ENCODE measurements at regions of chr18 and their contacts with region 1.

Region 1: DNA sequence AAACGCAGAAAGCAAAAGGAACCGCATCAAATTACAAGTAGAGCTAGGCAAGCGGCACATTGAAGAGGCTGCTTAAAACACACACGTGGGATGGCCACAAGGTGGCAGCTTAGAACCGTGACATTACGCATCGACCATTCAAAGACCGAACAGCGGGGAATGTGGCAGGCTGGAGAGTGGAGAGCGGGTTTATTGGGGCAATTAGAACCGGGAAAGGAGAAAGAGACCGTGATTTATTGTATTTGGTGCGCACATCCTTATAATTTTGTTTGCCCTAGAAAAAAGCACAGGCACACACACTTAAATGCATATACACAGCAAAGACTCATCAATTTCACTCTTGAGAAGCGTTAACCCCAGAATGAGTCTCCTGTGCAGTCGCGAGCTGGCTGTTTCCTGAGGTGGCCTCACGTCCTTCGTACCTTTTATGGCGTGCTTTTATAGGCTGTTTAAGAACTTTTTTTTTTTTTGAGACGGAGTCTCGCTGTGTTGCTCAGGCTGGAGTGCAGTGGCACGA is 31.7 kb upstream of the MEP1B start:
- DNase-seq: peak; percentile 92
- H3K4me3 Mint-ChIP-seq: no peak overlapping the region
- H3K27ac Mint-ChIP-seq: no peak overlapping the region
- H3K4me1 Mint-ChIP-seq: peaks cover 4% of the 10 kb centered on the region
- H3K27me3 Mint-ChIP-seq: no peaks in the 10 kb centered on the region
- CTCF ChIP-seq: peak; percentile 76

Region 2: GRCh38 chr18:32189790-32190189 is 31.6 kb after region 1 on chr18 and contains the start of gene MEP1B:
- CTCF ChIA-PET with region 1: interaction called, 13 read pairs
- POLR2A ChIA-PET with region 1: no interaction called
- intact Hi-C with region 1: no loop called
- DNase-seq: no peak
- H3K4me3 Mint-ChIP-seq: no peak within 1 kb of the TSS
- H3K27ac Mint-ChIP-seq: no peak within 1 kb of the TSS
- H3K4me1 Mint-ChIP-seq: no peaks in the 10 kb centered on the region
- H3K27me3 Mint-ChIP-seq: no peaks in the 10 kb centered on the region
- CTCF ChIP-seq: no peak
- total RNA-seq, gene MEP1B: not detected in 2 replicates

Region 3: DNA sequence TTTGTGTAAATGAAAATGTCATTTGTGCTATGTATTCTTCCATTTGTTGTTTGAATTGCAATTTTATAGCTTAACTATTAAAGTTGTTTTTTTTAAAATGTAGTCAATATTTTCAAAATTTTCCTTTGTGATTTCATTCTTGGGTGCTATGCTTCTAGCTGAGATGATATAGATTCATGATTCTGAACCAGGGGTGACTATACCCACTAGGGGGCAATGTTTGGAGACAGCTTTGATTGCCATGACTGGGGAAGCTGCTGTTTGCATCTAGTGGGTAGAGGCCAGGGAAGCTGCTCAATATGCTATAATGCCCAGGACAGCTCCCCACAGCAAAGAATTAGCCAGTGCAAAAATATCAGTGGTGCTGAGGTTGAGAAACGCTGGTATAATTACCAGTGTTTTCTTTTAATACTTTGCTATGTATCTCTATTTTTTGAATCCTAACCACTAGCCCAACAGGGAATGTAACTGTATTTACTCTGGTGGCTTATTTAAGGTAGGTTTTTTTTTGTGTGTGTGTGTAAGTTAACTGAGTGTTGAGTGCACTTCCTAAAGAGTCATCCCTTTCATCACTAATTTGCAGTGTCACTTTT is 131.4 kb after region 1 on chr18:
- CTCF ChIA-PET with region 1: interaction called, 14 read pairs
- POLR2A ChIA-PET with region 1: no interaction called
- intact Hi-C with region 1: no loop called
- DNase-seq: peak; percentile 82
- H3K4me3 Mint-ChIP-seq: no peak overlapping the region
- H3K27ac Mint-ChIP-seq: no peak overlapping the region
- H3K4me1 Mint-ChIP-seq: peaks cover 26% of the 10 kb centered on the region
- H3K27me3 Mint-ChIP-seq: no peaks in the 10 kb centered on the region
- CTCF ChIP-seq: peak; percentile 59

Region 4: DNA sequence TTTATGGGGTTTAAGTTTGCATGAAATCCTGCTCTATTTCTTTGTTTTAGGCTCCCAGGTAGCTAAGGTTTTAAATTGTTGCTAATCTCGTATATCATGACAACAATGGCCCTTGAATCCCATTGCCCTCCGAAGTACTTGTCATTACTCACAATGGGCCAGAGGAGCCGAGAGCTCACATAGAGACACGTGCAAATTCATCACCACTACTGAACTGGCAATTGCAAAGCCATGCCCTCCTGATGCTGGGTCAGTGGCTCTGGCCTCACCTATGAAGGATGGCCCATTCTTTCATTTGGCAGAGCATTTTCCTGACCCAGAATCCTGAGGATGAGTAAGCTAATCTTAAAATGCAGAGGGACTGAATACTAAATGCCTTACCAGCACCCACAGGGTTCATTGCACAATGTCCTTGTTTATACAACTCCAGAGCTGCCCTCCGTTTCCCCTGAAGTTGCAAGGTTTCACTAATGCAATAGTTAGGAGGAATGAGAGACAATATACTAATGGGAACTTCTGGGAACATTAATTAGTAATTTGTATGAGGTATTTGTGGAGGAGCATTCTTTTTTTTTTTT is 384.1 kb after region 1 on chr18:
- CTCF ChIA-PET with region 1: interaction called, 207 read pairs
- POLR2A ChIA-PET with region 1: no interaction called
- intact Hi-C with region 1: no loop called
- DNase-seq: peak; percentile 93
- H3K4me3 Mint-ChIP-seq: peak overlapping the region; percentile 62
- H3K27ac Mint-ChIP-seq: peak overlapping the region; percentile 17
- H3K4me1 Mint-ChIP-seq: peaks cover 29% of the 10 kb centered on the region
- H3K27me3 Mint-ChIP-seq: no peaks in the 10 kb centered on the region
- CTCF ChIP-seq: no peak

Region 5: DNA sequence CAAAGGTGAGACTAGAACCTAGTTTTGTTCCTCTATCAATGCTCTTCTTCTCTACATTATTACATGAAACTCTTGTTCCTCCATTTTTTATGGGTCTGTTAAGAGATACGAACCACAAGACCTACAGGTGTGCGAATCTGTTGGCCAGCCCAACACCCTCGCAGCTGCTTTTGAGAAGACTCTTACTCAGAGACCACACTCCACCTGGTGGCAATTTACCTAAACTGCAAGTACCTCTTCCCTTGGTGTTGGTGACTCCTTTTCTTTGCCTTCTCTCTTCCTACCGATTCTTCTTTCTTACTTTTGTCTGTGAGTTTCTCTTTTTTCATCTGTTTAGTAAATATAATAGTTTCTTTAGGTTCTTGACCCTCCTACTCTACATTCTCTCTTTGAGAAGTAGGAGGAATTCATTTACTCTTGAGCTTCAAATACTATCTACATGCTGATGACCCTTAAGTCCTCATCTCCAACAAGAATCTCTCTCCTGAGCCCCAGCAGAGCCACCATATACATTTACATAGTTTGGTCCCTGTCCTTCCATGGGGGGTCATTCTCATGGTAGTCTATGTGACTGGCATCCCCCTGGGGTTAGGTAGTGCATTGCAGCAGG is 394.4 kb after region 1 on chr18:
- CTCF ChIA-PET with region 1: interaction called, 207 read pairs
- POLR2A ChIA-PET with region 1: interaction called, 9 read pairs
- intact Hi-C with region 1: loop called (anchors 1 kb)
- DNase-seq: peak; percentile 81
- H3K4me3 Mint-ChIP-seq: no peak overlapping the region
- H3K27ac Mint-ChIP-seq: no peak overlapping the region
- H3K4me1 Mint-ChIP-seq: peaks cover 6% of the 10 kb centered on the region
- H3K27me3 Mint-ChIP-seq: no peaks in the 10 kb centered on the region
- CTCF ChIP-seq: peak; percentile 57

Region 6: GRCh38 chr18:32566960-32567359 is 408.8 kb after region 1 on chr18:
- CTCF ChIA-PET with region 1: interaction called, 10 read pairs
- POLR2A ChIA-PET with region 1: no interaction called
- intact Hi-C with region 1: no loop called
- DNase-seq: peak; percentile 59
- H3K4me3 Mint-ChIP-seq: no peak overlapping the region
- H3K27ac Mint-ChIP-seq: no peak overlapping the region
- H3K4me1 Mint-ChIP-seq: no peaks in the 10 kb centered on the region
- H3K27me3 Mint-ChIP-seq: no peaks in the 10 kb centered on the region
- CTCF ChIP-seq: no peak

Region 7: GRCh38 chr18:32674491-32674890 is 516.3 kb after region 1 on chr18:
- CTCF ChIA-PET with region 1: no interaction called
- POLR2A ChIA-PET with region 1: no interaction called
- intact Hi-C with region 1: loop called (anchors 10 kb)
- DNase-seq: peak; percentile 31
- H3K4me3 Mint-ChIP-seq: no peak overlapping the region
- H3K27ac Mint-ChIP-seq: no peak overlapping the region
- H3K4me1 Mint-ChIP-seq: no peaks in the 10 kb centered on the region
- H3K27me3 Mint-ChIP-seq: peaks cover 58% of the 10 kb centered on the region
- CTCF ChIP-seq: peak; percentile 30

Measured in MCF 10A (cell line).